Colonic mucosa (tissue), 4 donors: ENCODE measurements at regions of chr16 and their contacts with region 1.

Region 1: DNA sequence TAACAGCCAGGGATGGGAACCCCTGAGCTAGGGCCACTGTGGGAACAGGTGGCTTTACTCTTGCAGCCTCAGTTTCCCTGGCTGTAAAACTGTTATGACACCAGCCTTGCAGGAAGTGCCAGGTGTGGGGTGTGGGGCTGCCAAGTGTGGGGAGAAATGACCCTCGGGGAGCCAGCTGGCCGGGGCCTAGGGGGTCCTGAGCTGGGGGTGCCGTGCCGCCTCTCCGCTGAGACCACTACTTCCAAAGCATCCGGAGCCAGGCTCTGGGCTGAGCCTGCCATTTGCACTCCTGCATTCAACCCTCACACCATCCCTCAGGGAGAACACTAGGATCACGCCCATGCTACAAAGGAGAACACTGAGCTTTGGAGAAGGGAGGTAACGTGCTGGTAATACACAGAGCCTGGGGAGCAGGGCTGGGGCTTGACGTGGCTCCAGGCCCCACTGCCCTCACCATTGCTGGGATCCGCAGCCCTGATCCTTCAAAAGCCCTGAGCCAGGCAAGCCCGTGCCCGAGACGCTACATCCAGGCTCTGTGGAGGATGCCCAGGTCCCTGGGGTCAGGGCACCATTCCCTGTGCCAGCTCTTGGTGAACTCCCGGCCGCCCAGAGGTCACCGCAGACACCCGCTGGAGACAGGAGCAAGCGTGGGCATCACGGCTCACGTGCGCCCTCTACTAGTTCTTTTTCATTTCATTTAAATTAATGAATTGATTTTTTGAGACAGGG is 28.8 kb upstream of the GINS2 start:
- DNase-seq: peak; percentile 81
- H3K4me3 ChIP-seq: no peak overlapping the region
- H3K27ac ChIP-seq: no peak overlapping the region
- H3K4me1 ChIP-seq: no peaks in the 10 kb centered on the region
- H3K27me3 ChIP-seq: no peaks in the 10 kb centered on the region
- CTCF ChIP-seq: peak; percentile 54

Region 2: DNA sequence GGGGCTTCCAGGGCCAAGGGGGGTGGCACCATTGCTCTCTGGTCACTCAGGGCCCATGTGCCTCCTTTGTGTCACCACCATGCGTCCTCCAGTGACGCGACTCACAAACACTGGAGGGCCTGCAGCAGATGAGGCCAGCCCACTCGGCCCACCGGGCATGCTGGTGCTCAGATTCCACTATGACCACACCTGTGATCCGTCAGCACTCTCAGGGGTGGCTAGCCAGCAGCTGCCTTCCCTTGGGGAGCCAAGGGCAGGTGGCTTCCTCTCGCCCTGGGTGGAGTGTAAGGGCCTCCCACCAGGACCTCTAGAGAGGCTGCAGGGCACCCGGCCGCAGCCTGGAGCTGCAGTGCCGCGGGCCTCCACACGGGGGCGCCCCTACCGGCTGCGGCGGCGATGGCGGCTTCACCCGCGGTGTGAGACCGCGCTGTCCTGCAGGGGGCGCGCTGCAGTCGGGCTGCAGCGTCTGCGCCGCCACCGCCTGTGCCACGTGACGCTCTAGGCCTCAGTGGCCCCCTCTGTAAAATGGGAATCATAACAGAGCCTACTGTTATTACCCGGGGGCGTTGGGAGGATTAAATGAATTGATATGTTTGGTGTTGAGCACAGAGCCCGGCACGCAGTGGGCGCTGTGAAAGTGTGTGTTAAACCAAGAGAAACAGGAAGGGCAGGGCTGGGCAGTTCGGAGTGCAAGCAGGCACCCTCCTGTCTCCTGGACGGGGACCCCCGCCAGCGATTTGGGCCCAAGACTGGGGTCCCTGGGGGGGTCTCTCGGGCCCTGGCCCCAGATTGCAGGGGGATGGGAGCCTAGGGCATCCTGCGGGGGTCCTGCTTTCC is 296.8 kb before region 1 on chr16:
- intact Hi-C with region 1: loop called (anchors 5 kb)
- DNase-seq: peak; percentile 65
- H3K4me3 ChIP-seq: no peak overlapping the region
- H3K27ac ChIP-seq: no peak overlapping the region
- H3K4me1 ChIP-seq: peaks cover 16% of the 10 kb centered on the region
- H3K27me3 ChIP-seq: no peaks in the 10 kb centered on the region
- CTCF ChIP-seq: peak; percentile 100

Region 3: GRCh38 chr16:85586380-85587104 is 131.0 kb before region 1 on chr16:
- intact Hi-C with region 1: no loop called
- DNase-seq: no peak
- H3K4me3 ChIP-seq: no peak overlapping the region
- H3K27ac ChIP-seq: no peak overlapping the region
- H3K4me1 ChIP-seq: no peaks in the 10 kb centered on the region
- H3K27me3 ChIP-seq: no peaks in the 10 kb centered on the region
- CTCF ChIP-seq: no peak

Region 4: DNA sequence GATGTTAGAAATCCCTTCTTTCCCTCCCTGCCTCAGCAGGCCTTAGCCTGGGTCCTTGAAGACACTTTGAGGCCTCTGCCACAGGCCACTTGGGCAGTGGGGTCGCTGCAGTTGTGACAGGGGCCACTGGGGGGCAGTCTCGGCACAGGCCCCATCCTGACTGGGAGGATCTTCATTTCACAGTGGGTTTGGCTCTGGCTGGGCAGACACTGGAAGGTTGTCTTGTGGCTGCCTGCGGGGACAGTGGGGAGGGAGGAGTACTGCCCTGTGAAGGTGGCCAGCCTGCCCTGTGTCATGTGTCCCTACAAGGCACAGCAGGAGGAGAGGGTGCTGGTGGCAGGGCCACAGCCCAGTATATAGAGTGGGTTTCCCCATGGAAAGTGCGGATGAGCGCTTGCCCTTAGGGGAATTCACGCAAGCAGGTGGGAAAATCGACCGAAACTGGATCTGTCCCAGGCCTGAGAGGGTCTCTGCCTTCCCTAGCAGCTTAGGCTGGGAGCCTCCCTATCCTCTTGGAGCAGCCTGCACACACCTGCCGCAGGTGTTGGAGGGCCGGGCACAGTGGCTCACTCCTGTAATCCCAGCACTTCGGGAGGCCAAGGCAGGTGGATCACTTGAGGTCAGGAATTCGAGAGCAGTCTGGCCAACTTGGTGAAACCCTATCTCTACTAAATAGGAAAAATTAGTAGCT is 57.6 kb before region 1 on chr16:
- intact Hi-C with region 1: loop called (anchors 2 kb)
- DNase-seq: peak; percentile 67
- H3K4me3 ChIP-seq: no peak overlapping the region
- H3K27ac ChIP-seq: no peak overlapping the region
- H3K4me1 ChIP-seq: no peaks in the 10 kb centered on the region
- H3K27me3 ChIP-seq: no peaks in the 10 kb centered on the region
- CTCF ChIP-seq: peak; percentile 95

Region 5: DNA sequence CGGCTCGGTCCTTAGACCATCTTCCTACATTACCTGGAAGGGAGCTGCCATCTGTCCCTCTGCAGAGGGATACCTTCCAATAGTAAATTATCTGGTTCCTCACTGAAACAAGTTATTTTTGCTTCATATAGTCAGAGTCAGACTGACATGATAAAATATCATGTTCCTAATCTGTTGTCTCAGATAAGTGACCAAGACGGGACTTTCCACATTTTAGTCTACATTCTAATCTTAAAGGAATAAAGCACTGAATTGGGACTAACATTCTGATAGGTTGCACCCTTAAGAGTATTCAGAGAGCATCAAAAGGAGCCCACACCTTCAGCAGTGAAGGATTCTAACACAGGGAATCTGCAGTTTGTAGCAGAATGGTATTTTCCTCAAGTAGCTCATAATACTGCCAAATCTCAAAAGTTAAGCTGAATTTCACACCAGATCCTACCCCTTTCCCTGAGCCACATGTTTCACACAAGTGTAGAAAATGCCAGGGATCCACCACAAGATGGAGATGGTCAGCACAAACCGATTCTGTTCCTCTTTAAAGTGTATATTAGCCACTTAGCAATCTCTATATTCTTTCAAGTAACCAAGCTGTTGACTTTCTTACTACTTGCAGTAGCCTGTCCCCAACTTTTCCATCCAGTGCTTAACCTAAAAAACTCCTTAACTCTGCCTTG is 42.2 kb before region 1 on chr16:
- intact Hi-C with region 1: loop called (anchors 5 kb)
- DNase-seq: no peak
- H3K4me3 ChIP-seq: no peak overlapping the region
- H3K27ac ChIP-seq: no peak overlapping the region
- H3K4me1 ChIP-seq: no peaks in the 10 kb centered on the region
- H3K27me3 ChIP-seq: no peaks in the 10 kb centered on the region
- CTCF ChIP-seq: no peak